PC-3 (cell line): ENCODE measurements at regions of chr6 and their contacts with region 1.

Region 1: DNA sequence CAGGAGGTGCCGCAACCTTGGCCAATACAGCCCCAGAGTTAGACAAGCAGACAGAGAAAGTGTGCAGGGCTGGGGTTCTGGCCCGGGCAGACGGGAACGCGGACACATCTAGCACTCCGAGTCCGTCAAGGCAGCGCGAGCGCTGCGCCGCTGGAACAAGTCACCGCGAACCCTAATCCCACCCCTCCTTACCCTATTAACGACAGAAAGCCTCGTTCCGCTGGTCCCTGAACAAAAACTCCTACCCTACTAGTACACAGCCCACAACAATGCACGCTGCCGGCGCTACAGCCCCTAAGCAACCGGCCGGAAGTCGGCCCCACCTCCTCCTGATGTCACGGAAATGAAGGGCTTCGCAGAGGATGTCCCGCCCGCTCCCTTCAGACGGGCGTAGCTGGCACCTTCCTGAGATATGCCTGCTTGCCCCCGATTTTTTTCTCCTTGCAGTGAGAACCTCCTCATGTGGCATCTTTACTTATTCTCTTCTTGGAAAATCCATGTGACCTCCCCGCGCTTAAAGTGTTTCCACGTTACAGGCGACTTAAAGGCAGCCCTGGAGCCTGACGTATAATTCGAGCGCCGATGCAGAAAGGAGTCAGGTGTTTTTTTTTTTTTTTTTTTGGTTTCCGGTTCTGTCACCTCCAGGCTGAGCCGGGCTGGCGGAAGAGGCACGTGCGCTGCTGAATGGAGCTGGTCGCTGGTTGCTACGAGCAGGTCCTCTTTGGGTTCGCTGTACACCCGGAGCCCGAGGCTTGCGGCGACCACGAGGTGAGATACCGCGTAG is at the starts of genes C6orf52 and PAK1IP1:
- DNase-seq: peak; percentile 91
- ATAC-seq: peak; percentile 96
- H3K4me3 ChIP-seq: peak within 1 kb of the TSS; percentile 98
- H3K27ac ChIP-seq: peak within 1 kb of the TSS; percentile 94
- H3K4me1 ChIP-seq: peaks cover 19% of the 10 kb centered on the region
- H3K27me3 ChIP-seq: no peaks in the 10 kb centered on the region
- CTCF ChIP-seq: no peak
- total RNA-seq, gene C6orf52: 0.80 TPM in 1 of 2 replicates, not detected in the other
- total RNA-seq, gene PAK1IP1: 32.8 and 34.0 TPM in 2 replicates

Region 2: DNA sequence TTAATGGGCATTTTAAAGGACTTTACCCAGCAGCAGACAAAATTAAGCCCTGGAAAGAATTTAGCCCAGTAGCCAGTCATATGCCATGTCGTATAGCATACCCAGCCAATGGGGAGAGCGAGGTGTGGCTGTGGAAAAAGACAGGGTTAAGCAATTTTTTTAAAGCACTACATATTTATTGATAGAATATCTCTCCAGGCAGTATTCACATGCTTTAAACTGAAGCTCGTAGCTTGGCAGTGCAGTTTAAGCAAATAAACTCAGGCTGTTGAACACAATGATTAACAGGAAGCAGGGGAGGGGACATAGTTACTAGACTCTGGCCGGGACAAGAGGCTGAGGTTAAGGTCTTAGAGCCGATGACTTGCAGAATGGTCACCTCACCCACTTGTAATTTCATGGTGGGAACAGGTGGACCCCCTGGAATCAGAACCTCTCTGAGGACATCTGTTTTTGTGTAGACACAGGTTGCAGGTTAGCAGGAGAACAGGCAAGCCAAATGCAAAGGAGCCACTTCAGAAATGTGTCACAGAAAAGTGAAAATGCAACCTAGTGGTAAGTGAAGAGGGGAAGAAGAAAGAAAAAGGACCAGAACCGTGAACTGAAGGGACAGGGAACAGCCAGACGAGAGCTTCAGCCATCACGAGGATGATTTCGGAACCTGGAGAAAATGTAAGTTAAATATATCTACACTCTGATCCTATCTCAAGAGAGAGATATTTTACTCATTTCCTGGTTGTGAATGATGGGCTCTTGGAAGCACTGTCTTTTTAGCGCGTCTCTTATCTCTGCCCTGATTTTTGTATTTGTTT is 166.1 kb before region 1 on chr6:
- CTCF ChIA-PET with region 1: no interaction called
- POLR2A ChIA-PET with region 1: interaction called, 4 read pairs
- intact Hi-C with region 1: loop called (anchors 1 kb)
- DNase-seq: peak; percentile 88
- ATAC-seq: peak; percentile 78
- H3K4me3 ChIP-seq: peak overlapping the region; percentile 81
- H3K27ac ChIP-seq: peak overlapping the region; percentile 82
- H3K4me1 ChIP-seq: peaks cover 25% of the 10 kb centered on the region
- H3K27me3 ChIP-seq: no peaks in the 10 kb centered on the region
- CTCF ChIP-seq: 0 out of 2 replicates have a peak, but pooled peaks have one; percentile 9

Region 3: GRCh38 chr6:10552270-10552810 is 142.2 kb before region 1 on chr6:
- CTCF ChIA-PET with region 1: no interaction called
- POLR2A ChIA-PET with region 1: no interaction called
- intact Hi-C with region 1: no loop called
- DNase-seq: no peak
- ATAC-seq: no peak
- H3K4me3 ChIP-seq: no peak overlapping the region
- H3K27ac ChIP-seq: no peak overlapping the region
- H3K4me1 ChIP-seq: no peaks in the 10 kb centered on the region
- H3K27me3 ChIP-seq: no peaks in the 10 kb centered on the region
- CTCF ChIP-seq: no peak

Region 4: DNA sequence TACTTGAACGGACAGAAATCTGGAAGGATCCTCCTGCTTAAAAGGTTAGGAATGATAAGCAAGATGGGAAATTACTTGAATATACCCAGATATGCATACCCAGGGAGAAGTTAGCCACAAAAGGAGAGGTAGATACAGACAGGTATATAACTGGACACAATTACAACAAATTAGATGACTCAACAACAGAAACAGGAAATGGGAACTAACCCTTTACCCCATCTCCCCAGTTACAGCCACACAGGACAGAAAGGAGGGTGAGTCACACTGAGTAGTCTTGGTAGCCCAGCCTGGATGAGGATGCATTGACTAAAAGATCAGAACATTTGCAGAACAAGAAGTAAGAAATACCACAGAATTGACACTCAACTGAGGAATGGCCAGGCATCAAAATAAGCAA is 61.3 kb before region 1 on chr6:
- CTCF ChIA-PET with region 1: no interaction called
- POLR2A ChIA-PET with region 1: no interaction called
- intact Hi-C with region 1: no loop called
- DNase-seq: peak; percentile 95
- ATAC-seq: peak; percentile 100
- H3K4me3 ChIP-seq: no peak overlapping the region
- H3K27ac ChIP-seq: peak overlapping the region; percentile 69
- H3K4me1 ChIP-seq: peaks cover 17% of the 10 kb centered on the region
- H3K27me3 ChIP-seq: no peaks in the 10 kb centered on the region
- CTCF ChIP-seq: no peak

Region 5: GRCh38 chr6:10722820-10723566 is 28.5 kb after region 1 on chr6 and contains the start of gene TMEM14C:
- CTCF ChIA-PET with region 1: interaction called, 11 read pairs
- POLR2A ChIA-PET with region 1: interaction called, 6 read pairs
- intact Hi-C with region 1: loop called (anchors 2 kb)
- DNase-seq: peak; percentile 96
- ATAC-seq: peak; percentile 96
- H3K4me3 ChIP-seq: peak within 1 kb of the TSS; percentile 88
- H3K27ac ChIP-seq: peak within 1 kb of the TSS; percentile 67
- H3K4me1 ChIP-seq: peaks cover 24% of the 10 kb centered on the region
- H3K27me3 ChIP-seq: no peaks in the 10 kb centered on the region
- CTCF ChIP-seq: no peak
- total RNA-seq, gene TMEM14C: 85.8 and 87.8 TPM in 2 replicates

Region 6: GRCh38 chr6:10747251-10747972 is 52.9 kb after region 1 on chr6 and contains the start of gene TMEM14B:
- CTCF ChIA-PET with region 1: no interaction called
- POLR2A ChIA-PET with region 1: no interaction called
- intact Hi-C with region 1: loop called (anchors 1 kb)
- DNase-seq: peak; percentile 98
- ATAC-seq: peak; percentile 95
- H3K4me3 ChIP-seq: peak within 1 kb of the TSS; percentile 99
- H3K27ac ChIP-seq: peak within 1 kb of the TSS; percentile 49
- H3K4me1 ChIP-seq: peaks cover 25% of the 10 kb centered on the region
- H3K27me3 ChIP-seq: no peaks in the 10 kb centered on the region
- CTCF ChIP-seq: no peak
- total RNA-seq, gene TMEM14B: 93.8 and 115 TPM in 2 replicates

Region 7: GRCh38 chr6:10779076-10779475 is 84.6 kb after region 1 on chr6:
- CTCF ChIA-PET with region 1: no interaction called
- POLR2A ChIA-PET with region 1: no interaction called
- intact Hi-C with region 1: no loop called
- DNase-seq: no peak
- ATAC-seq: no peak
- H3K4me3 ChIP-seq: no peak overlapping the region
- H3K27ac ChIP-seq: no peak overlapping the region
- H3K4me1 ChIP-seq: no peaks in the 10 kb centered on the region
- H3K27me3 ChIP-seq: no peaks in the 10 kb centered on the region
- CTCF ChIP-seq: no peak

Region 8: GRCh38 chr6:10800829-10801535 is 106.5 kb after region 1 on chr6:
- CTCF ChIA-PET with region 1: no interaction called
- POLR2A ChIA-PET with region 1: no interaction called
- intact Hi-C with region 1: loop called (anchors 5 kb)
- DNase-seq: peak; percentile 82
- ATAC-seq: peak; percentile 99
- H3K4me3 ChIP-seq: no peak overlapping the region
- H3K27ac ChIP-seq: no peak overlapping the region
- H3K4me1 ChIP-seq: peaks cover 9% of the 10 kb centered on the region
- H3K27me3 ChIP-seq: no peaks in the 10 kb centered on the region
- CTCF ChIP-seq: peak; percentile 99

Region 9: GRCh38 chr6:10862361-10862760 is 167.9 kb after region 1 on chr6:
- CTCF ChIA-PET with region 1: no interaction called
- POLR2A ChIA-PET with region 1: no interaction called
- intact Hi-C with region 1: no loop called
- DNase-seq: no peak
- ATAC-seq: no peak
- H3K4me3 ChIP-seq: no peak overlapping the region
- H3K27ac ChIP-seq: no peak overlapping the region
- H3K4me1 ChIP-seq: no peaks in the 10 kb centered on the region
- H3K27me3 ChIP-seq: no peaks in the 10 kb centered on the region
- CTCF ChIP-seq: no peak